Calu3 (cell line): ENCODE measurements at regions of chr1 and their contacts with region 1.

Region 1: DNA sequence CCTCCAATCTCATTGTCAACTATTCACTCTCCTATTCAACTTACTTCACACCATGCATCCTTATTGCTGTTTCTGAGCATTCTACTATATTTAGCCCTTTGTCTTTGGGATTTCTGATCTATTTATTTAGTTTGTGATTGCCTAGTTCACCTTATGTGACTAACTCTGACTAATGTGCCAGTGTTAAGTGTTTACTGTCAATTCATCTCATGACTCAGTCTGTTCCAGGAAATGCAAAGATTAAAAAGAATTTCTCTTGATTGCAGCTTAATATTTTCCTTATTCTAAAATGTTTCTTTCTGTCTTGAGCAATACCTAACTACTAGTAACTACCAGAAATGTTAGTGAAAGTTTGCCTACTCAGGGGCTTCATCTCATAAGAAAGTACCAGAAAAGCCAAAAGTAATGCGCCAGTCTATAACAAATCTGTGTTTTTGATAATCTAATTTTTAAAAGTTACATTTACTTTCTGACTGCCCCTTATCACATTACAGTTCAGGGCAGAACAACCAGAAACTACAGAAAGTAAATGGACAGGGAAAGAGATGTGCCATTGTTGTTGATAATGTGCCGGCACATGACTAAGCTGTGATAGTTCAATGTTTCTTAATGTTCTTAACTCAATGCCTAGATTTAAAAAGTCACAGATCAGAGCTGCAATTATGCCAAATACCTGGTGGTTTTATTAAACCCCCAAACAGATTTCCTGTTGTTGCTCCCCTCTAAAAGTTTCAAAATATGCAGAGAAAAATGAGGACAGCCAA is 556.5 kb downstream of the PTBP2 start:
- DNase-seq: no peak
- H3K4me3 Mint-ChIP-seq: peak overlapping the region; percentile 9
- H3K27ac Mint-ChIP-seq: peak overlapping the region; percentile 96
- H3K4me1 Mint-ChIP-seq: peaks cover 45% of the 10 kb centered on the region
- H3K27me3 Mint-ChIP-seq: no peaks in the 10 kb centered on the region
- CTCF ChIP-seq: no peak

Region 2: GRCh38 chr1:97192872-97193572 is 85.1 kb before region 1 on chr1:
- CTCF ChIA-PET with region 1: no interaction called
- intact Hi-C with region 1: loop called (anchors 2 kb)
- DNase-seq: peak; percentile 50
- H3K4me3 Mint-ChIP-seq: peak overlapping the region; percentile 12
- H3K27ac Mint-ChIP-seq: peak overlapping the region; percentile 56
- H3K4me1 Mint-ChIP-seq: peaks cover 18% of the 10 kb centered on the region
- H3K27me3 Mint-ChIP-seq: no peaks in the 10 kb centered on the region
- CTCF ChIP-seq: no peak

Region 3: DNA sequence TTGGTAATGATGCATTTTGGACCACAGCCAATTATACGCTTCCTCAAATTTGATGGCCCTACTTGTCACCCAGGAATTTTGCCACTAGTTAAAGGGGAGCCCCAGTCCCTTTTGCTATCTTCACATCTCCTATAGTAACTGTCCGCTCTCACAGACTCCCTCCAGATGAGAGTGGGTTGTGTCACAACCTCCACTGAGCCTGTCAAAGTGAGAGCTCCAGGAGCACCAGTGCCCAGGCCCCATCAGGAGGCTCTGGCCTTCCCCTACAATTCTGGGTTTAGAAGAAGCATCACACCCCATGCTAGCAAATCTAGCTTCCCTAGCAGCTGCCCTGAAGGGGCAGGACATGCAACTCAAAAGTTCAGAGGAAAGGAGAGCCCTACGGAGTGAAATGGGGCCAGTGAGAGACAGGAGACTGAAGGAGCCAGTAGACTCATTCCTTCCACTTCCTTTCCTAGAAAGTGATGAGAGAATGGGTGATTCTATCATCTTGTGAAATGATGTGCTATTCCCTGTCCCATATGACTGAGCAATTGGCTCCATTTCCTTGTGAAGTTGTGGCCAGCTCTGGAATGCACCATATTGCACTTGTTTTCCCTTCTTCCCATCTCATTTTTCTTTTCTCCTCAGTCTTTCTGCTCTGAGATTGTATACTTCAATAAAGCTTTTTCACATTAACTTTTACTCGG is 101.5 kb after region 1 on chr1:
- CTCF ChIA-PET with region 1: no interaction called
- intact Hi-C with region 1: no loop called
- DNase-seq: no peak
- H3K4me3 Mint-ChIP-seq: no peak overlapping the region
- H3K27ac Mint-ChIP-seq: no peak overlapping the region
- H3K4me1 Mint-ChIP-seq: peaks cover 6% of the 10 kb centered on the region
- H3K27me3 Mint-ChIP-seq: no peaks in the 10 kb centered on the region
- CTCF ChIP-seq: no peak